ENCODE measurements at regions of chr1 and their contacts with region 1.

Region 1: GRCh38 chr1:203006948-203007871 is at the start of gene TMEM183A:
- DNase-seq: peak; percentile 54
- H3K4me3 ChIP-seq: peak within 1 kb of the TSS; percentile 86
- CTCF ChIP-seq: no peak

Region 2: DNA sequence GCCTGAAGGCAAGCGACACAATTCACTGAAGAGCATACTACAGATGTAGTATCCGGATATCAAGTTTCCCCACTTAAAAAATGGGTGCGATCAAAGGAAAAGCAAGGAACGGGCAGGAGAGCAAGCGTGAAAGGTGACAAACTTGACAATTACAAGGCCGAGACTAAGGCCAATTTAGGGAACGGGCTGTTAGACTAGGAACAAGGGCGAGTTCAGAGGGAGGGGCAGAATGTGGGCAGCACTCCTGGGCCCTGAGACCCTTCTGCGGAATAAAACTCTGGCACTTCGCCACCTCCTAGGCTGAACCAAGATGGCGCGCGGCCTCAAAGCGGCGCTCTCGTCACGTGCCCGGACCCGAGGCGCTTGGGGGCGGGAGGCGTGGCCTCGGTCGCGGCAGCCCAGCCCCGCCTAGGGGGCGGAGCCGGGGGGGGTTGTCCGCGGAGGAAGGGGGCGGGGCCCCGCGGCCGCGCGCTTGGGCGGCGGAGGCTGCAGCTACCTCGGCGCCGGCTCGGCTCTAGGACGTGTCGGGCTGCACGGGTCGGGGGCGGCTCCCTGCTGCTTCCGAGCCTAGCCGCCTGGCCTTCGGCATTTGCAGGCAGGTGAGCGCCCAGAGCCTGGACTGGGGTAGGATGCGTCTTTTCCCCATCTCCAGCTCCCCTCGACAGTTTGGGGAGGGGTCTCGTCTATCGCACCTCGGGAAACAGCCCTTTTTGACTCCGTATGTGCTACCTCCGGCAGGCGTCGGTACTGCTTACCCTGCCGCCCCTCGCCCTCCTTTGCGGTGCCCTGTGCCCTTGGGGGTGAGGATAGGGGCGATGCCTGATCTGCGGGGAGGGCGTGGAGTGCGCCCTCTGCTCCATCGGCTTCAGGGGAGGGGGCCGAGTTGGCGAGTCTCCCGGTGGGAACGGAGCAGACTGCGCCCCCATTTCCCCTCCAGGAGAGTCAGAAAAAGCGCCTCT is 19.1 kb after region 1 on chr1 and contains the start of gene PPFIA4:
- CTCF ChIA-PET with region 1: interaction called, 20 read pairs
- POLR2A ChIA-PET with region 1: interaction called, 4 read pairs
- DNase-seq: no peak
- H3K4me3 ChIP-seq: peak within 1 kb of the TSS; percentile 88
- CTCF ChIP-seq: no peak

Measured in AG04449 (cell line).